Aorta (tissue), 5 donors: ENCODE measurements at regions of chr3 and their contacts with region 1.

Region 1: DNA sequence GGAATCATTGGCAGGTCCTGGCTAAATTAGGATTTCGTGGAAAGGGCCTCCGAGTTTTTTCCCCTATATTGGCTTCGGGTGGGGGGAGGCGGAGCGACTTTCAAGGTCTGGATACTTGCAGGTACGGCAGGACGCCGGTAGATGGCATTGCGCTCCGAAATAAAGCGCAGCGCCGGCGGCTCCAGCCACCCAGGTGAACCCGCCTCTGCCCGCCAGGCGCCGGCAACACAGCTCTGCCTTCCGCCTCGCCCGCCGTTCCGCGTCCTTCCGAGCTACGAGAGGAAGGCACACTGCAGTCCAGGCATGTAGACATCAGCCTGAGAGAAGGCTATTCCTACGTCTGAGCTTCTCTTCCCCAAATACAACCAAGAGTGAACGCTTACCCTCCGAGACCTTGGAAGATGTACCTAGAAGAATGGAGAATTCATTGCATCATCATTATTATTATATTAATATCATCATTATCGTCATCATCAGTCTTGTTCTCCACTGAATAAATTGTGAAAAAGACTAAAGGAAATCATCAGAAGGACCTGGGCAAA is 514.1 kb downstream of the MECOM start:
- DNase-seq: peak; percentile 86 to 94
- ATAC-seq: peak; percentile 90
- H3K4me3 ChIP-seq: peak overlapping the region; percentile 25 to 65
- H3K27ac ChIP-seq: peak overlapping the region in 1 of 2 donors; percentile 38
- H3K4me1 ChIP-seq: peaks cover 0 to 2% of the 10 kb centered on the region in 2 donors
- H3K27me3 ChIP-seq: no peaks in the 10 kb centered on the region

Region 2: DNA sequence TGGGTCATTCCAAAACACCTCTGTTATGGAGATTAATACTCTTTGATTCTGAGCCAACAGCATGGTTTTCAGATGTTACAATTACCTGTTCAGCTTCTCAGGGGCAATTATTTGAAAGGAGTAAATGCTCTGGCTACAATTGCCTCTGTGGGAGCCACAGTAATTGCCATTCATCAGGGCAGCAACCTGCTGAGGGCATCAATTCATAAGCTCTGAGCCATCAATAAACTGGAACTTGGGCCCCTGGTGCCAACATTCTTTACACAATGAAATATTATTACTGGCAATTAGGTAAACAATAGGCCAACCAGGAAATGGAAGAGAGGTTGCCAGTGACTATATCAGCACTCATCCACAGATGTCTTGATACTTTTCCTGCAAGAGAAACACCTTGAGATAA is 146.7 kb before region 1 on chr3:
- intact Hi-C with region 1: no loop called
- DNase-seq: no peak
- ATAC-seq: no peak
- H3K4me3 ChIP-seq: no peak overlapping the region
- H3K27ac ChIP-seq: no peak overlapping the region
- H3K4me1 ChIP-seq: no peaks in the 10 kb centered on the region
- H3K27me3 ChIP-seq: no peaks in the 10 kb centered on the region

Region 3: GRCh38 chr3:169091216-169091823 is 58.1 kb before region 1 on chr3:
- intact Hi-C with region 1: no loop called
- DNase-seq: no peak
- ATAC-seq: no peak
- H3K4me3 ChIP-seq: no peak overlapping the region
- H3K27ac ChIP-seq: no peak overlapping the region
- H3K4me1 ChIP-seq: no peaks in the 10 kb centered on the region
- H3K27me3 ChIP-seq: no peaks in the 10 kb centered on the region

Region 4: DNA sequence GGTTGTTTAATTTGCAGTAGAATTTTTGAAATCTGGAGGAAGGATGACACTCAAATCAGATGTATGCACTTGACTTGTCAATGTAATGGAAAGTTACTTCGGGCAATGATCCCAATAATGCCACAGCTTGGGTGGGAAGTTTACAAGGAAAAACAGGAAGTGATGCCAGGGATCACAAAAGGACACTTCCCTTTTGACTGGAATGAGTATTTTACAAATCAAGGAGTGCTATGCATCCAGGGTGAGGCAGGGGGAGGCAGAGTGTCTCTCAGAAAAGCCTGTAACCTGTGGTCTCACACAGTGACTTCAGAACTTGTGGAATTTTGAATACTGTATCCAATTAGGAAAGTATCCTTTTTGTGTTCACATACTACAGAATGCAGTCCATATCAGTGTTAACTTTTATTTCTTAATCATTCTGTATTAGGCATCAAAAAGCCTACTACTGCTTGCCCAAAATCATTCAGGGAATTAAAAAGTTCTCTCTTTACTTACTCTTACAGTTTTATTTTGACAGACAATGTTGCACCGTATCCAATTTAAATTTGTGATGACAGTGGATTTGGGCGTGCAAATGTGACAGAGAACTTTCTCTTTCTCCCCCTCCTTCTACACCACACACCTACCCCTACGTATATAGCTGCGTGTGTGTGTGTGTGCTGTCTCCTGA is 69.0 kb after region 1 on chr3:
- intact Hi-C with region 1: loop called in 1 of 2 experiments (anchors 10 kb)
- DNase-seq: peak in 1 of 2 donors; percentile 55
- ATAC-seq: peak; percentile 70
- H3K4me3 ChIP-seq: no peak overlapping the region
- H3K27ac ChIP-seq: no peak overlapping the region
- H3K4me1 ChIP-seq: no peaks in the 10 kb centered on the region
- H3K27me3 ChIP-seq: no peaks in the 10 kb centered on the region

Region 5: GRCh38 chr3:169232863-169233262 is 83.4 kb after region 1 on chr3:
- intact Hi-C with region 1: no loop called
- DNase-seq: no peak
- ATAC-seq: no peak
- H3K4me3 ChIP-seq: no peak overlapping the region
- H3K27ac ChIP-seq: peak overlapping the region; percentile 61 to 82
- H3K4me1 ChIP-seq: peaks cover 0 to 14% of the 10 kb centered on the region in 2 donors
- H3K27me3 ChIP-seq: no peaks in the 10 kb centered on the region

Region 6: DNA sequence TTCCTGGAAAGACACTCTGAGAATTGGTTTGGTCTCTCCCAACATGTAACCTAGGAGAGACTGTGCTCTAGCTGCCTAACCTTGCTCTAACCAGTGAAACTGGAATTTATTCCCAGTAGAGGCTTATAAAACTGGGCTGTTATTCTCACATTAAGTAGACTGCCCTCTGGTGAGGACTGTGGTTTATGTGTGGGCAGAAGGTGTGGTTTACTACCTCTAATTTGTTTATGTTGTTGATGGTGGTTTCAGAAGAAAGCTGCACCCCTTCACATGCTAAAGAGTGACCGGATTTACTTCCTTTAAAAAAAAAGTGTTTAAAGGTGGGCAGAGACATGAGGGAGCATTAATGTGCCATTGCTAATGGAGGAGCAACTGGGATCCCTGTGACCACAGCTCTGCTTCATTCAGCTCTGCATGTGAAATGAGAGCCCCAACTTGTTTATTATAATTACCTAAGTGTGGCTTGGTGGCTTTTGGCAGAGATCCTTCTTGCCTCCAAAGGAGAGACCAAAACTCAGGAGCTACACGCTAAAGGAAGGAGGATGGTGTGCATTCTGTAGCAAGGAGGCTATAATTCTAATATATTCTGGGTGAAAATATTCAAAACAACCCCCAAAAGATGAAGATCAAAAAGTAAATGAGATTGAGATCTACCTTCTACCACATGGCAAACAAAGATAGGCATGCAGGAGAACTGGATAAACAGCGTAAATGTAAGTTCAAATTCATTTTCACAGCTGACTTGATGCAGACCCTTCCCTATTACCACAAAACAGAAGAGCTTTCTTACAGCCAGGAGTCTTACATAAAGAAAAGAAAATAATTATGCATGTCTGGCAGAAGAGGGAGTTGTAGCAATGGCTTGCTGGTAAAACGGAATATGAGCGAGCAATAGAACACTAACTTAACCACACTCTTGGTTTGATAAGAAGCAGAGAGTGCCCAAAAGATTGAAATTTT is 241.1 kb after region 1 on chr3:
- intact Hi-C with region 1: loop called (anchors 5 to 10 kb)
- DNase-seq: no peak
- ATAC-seq: no peak
- H3K4me3 ChIP-seq: no peak overlapping the region
- H3K27ac ChIP-seq: peak overlapping the region; percentile 36 to 94
- H3K4me1 ChIP-seq: peaks cover 4 to 5% of the 10 kb centered on the region in 2 donors
- H3K27me3 ChIP-seq: no peaks in the 10 kb centered on the region